ENCODE measurements at regions of chr2 and their contacts with region 1.

Region 1: DNA sequence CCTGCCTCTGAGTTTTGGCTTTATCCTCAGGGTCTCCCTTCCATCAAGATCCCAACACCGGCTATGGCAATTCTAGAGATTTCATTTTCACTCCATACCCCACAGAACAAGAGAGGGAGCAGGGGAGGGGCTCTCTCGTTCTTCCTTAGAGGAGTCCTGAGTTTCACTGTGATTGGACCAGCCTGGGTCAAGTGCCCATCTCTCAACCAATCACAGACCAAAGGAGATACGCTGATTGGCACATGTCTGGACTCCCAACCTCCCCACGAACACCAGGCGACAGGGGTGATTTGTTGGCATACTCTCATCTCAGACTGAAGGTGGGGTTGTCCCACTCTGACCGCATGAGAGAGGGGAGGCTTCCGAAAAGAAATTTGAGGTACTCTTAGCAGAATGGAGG is 64.7 kb downstream of the NPPC start:
- DNase-seq: no peak
- CTCF ChIP-seq: no peak

Region 2: DNA sequence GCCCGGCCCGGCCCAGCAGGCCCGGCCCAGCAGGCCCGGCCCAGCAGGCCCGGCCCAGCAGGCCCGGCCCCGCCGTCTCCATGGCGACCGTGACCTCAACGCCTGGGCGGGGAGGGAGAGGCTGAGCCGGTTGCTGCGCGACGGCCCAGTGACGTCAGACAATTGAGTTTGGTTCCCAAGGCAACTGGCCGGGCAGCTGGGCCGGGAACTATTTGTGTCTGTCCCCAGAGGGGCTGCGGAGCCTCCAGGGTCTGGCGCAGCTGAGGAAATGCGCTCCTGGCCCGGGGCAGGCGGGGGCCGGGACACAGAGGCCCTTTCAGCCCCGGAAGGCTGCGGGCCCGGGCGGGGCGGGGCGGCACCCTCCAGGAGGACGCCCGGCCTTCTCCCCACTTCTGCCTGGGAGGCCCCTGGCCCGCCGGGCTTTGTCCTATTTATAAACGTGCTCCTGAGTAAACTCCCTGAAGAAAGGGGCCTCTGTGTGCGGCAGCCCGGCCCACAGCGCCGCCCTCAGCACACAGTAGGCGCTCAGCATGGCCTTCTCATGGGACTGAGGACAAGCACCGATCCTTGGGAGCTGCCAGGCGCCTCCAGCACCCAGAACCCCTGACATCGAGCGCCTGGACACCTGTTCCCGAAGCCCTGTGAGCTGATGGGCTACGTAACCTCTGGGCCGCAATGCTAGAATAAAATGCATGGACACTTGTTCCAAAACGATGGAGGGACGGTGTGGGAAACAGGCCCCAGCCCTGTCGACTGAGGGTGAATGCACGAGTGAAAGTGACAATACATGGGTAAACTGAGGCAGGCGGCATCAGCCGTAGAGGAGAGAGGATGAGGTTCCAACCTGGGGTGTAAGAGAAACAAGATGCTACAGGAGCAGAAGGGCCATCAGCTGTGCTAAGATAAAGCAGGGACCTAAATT is 256.6 kb before region 1 on chr2:
- in situ Hi-C with region 1: no loop called
- DNase-seq: peak; percentile 99
- CTCF ChIP-seq: no peak

Region 3: DNA sequence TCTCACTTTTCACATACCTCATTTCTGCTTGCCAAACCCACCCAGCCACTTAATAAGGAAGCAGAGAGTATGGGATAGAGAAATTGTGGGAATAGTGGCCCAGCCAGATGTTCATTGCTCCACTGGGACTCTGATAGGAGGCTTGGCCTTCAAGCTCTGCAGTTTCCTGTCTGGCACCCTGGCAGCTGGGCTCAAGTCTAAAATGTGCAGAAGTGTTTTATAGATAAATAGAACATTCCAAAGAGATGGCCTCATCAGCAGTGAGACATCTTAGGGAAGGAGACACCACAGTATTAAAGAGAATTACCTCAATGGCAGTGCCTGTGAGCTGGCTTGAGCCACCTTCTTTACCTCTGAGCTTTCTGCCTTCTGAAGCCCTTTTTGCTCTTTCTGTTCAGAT is 50.6 kb before region 1 on chr2:
- in situ Hi-C with region 1: loop called (anchors 10 kb)
- DNase-seq: no peak
- CTCF ChIP-seq: no peak